Common myeloid progenitor, CD34-positive (primary cell): ENCODE measurements at regions of chr5 and their contacts with region 1.

Region 1: DNA sequence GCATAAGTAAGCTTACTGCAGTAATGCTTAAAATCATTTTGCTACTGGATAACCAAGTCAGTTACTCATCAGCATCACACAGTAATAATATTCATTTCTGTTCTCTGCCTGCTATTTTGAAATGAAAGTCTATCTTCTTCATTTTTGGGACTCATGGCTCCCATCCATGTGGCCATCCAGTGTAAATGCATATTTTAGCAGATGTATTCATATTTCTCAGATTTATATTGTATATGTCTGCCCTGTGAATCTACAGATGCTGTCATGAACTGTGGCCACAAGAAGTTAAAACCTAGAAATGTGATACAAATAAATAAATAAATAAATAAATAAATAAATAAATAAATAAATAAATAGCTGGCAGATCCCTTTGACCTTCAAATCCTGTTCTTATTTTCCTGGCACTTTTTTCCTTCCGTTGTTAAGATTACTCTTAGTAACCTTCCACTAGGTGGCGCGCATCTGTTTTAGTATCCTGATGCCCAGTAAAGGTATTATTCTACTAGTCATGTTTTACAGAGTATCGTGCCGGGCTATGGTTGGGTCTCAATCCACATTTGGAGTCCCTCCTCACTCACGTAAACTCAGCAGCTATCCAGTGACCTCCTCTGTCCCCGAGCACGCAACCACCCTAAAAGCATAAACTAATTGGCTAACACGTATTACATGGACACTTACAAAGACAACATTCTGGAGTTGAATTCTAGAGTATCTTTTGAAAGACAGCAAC is 79.2 kb upstream of the IL7R start:
- DNase-seq: peak; percentile 69 to 83 (median 77)
- H3K4me3 ChIP-seq: no peak overlapping the region
- H3K27ac ChIP-seq: no peak overlapping the region
- H3K4me1 ChIP-seq: peaks cover 0 to 14% (median 7%) of the 10 kb centered on the region in 4 experiments
- H3K27me3 ChIP-seq: no peaks in the 10 kb centered on the region

Region 2: GRCh38 chr5:35789732-35790456 is 12.4 kb after region 1 on chr5:
- CTCF ChIA-PET with region 1: interaction called, 20 read pairs
- POLR2A ChIA-PET with region 1: interaction called, 4 read pairs
- DNase-seq: no peak
- H3K4me3 ChIP-seq: no peak overlapping the region
- H3K27ac ChIP-seq: no peak overlapping the region
- H3K4me1 ChIP-seq: peaks cover 0 to 2% (median 1%) of the 10 kb centered on the region in 4 experiments
- H3K27me3 ChIP-seq: no peaks in the 10 kb centered on the region

Region 3: DNA sequence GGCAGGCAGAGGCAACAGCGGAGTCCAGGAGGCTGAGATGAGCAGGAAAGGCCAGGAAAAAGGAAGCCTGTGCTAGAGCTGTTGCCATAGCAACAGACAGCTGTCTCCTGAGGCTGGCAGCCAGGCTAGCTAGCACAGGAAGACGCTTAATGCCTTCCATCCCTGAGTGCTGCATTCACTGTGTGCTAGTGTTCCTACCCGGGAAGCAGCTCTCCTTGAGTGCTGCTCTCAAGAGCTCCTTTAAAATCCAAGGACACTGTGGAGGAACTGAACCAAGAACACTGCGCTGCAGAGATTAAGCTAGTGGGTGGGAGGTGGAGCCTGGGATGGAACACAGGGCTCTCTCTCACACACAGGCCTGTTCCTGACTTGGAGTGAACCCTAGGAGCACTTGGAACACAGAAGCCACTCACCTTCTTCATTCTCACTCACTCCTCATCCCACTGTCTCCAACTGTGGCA is 25.7 kb after region 1 on chr5:
- CTCF ChIA-PET with region 1: interaction called, 10 read pairs
- POLR2A ChIA-PET with region 1: no interaction called
- DNase-seq: peak in 2 of 3 donors; percentile 17 to 18
- H3K4me3 ChIP-seq: no peak overlapping the region
- H3K27ac ChIP-seq: no peak overlapping the region
- H3K4me1 ChIP-seq: peaks cover 0 to 8% (median 5%) of the 10 kb centered on the region in 4 experiments
- H3K27me3 ChIP-seq: no peaks in the 10 kb centered on the region

Region 4: DNA sequence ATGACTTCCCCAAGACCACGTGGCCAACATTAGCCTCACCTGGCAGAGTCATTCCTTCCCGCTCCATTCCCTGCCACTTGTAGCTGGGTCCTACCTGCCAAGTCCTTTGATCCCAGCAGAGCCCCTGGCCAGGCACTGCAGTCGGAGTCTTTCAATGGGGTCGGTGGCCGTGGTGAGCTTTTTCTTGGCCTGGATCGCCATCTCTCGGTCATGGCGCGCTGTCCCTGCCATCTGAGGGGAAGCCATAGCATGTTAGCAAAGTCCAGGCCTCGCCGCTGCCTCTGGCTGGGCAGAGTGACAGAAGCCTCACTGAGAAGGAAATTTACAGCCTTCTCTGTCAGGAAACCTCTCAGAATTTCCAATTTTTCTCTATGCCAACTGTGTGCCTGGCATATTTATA is 143.4 kb after region 1 on chr5:
- CTCF ChIA-PET with region 1: interaction called, 127 read pairs
- POLR2A ChIA-PET with region 1: no interaction called
- DNase-seq: no peak
- H3K4me3 ChIP-seq: no peak overlapping the region
- H3K27ac ChIP-seq: no peak overlapping the region
- H3K4me1 ChIP-seq: peaks cover 2 to 17% (median 15%) of the 10 kb centered on the region in 4 experiments
- H3K27me3 ChIP-seq: peaks cover 0 to 4% (median 0%) of the 10 kb centered on the region in 5 experiments

Region 5: DNA sequence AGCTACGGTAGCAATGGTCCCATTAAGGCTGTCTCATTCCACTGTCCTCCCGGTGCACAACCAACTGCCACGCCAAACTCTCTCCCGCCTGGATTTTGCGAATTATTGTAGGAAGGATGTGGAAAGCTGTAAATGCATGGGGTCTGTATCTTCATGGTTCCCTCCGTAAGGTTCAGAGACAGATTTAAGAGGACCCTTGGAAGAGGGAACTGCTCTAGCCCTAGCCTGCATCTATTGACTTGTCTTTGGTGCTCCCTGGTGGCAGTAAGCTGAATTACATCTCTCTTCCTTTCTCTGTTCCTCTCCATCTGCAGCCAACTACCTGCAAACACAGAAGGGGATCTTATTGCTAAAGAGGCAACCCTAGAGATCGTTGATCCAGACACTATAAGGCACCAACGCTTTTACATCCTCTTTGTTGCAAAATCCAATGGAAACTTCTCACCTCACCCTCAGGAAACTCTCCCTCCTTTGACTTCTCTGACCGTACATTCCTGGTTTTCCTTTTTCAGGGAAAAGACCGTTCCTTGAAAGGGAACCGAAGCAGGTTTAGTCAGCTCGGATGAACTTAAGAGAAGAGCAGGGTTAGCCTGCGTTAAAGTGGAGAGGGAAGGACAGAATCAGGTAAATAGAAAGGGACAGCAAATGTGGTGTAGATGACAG is 149.0 kb after region 1 on chr5:
- CTCF ChIA-PET with region 1: interaction called, 127 read pairs
- POLR2A ChIA-PET with region 1: no interaction called
- DNase-seq: peak; percentile 63 to 85 (median 76)
- H3K4me3 ChIP-seq: no peak overlapping the region
- H3K27ac ChIP-seq: no peak overlapping the region
- H3K4me1 ChIP-seq: peaks cover 2 to 20% (median 18%) of the 10 kb centered on the region in 4 experiments
- H3K27me3 ChIP-seq: peaks cover 0 to 6% (median 0%) of the 10 kb centered on the region in 5 experiments

Region 6: GRCh38 chr5:35979715-35980114 is 202.2 kb after region 1 on chr5:
- CTCF ChIA-PET with region 1: no interaction called
- POLR2A ChIA-PET with region 1: no interaction called
- DNase-seq: peak in 1 of 3 donors; percentile 7
- H3K4me3 ChIP-seq: no peak overlapping the region
- H3K27ac ChIP-seq: no peak overlapping the region
- H3K4me1 ChIP-seq: peaks cover 0 to 3% (median 0%) of the 10 kb centered on the region in 4 experiments
- H3K27me3 ChIP-seq: peaks cover 0 to 2% (median 0%) of the 10 kb centered on the region in 5 experiments